Activated T-helper 1 cell treated with anti-CD3 and anti-CD28 coated beads, Interleukin-12 subunit alpha, Interleukin-12 subunit beta, Interleukin-2, Interleukin-4 antibody, amounts not matched to agents 30 ng/mL and 10 ng/mL and 1 ng/mL, durations not matched to agents 14 hours and 24 hours and 36 hours (primary cell): ENCODE measurements at regions of chr16 and their contacts with region 1.

Region 1: DNA sequence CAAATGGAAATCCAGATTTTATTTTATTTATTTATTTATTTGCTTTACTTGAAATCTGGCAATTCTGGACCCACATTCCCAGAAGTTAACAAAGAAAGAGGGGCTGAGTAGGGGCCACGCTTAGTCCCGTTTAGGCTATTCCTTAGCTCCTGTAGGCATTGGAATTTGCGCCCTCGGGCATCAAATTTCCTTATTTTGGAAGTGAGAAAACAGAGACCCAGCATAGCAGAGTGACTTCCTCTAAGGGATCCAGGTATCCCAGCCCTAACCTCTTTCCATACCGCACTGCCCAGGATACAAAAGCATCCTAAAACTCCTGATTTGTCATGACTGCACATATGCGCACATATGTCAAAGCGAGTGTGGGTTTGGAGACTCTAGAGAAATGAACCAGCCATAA is 19.0 kb upstream of the SMG1 start:
- DNase-seq: no peak
- H3K4me3 Mint-ChIP-seq: no peak overlapping the region
- H3K27ac Mint-ChIP-seq: no peak overlapping the region
- H3K4me1 Mint-ChIP-seq: peaks cover 37% of the 10 kb centered on the region
- H3K27me3 Mint-ChIP-seq: no peaks in the 10 kb centered on the region

Region 2: DNA sequence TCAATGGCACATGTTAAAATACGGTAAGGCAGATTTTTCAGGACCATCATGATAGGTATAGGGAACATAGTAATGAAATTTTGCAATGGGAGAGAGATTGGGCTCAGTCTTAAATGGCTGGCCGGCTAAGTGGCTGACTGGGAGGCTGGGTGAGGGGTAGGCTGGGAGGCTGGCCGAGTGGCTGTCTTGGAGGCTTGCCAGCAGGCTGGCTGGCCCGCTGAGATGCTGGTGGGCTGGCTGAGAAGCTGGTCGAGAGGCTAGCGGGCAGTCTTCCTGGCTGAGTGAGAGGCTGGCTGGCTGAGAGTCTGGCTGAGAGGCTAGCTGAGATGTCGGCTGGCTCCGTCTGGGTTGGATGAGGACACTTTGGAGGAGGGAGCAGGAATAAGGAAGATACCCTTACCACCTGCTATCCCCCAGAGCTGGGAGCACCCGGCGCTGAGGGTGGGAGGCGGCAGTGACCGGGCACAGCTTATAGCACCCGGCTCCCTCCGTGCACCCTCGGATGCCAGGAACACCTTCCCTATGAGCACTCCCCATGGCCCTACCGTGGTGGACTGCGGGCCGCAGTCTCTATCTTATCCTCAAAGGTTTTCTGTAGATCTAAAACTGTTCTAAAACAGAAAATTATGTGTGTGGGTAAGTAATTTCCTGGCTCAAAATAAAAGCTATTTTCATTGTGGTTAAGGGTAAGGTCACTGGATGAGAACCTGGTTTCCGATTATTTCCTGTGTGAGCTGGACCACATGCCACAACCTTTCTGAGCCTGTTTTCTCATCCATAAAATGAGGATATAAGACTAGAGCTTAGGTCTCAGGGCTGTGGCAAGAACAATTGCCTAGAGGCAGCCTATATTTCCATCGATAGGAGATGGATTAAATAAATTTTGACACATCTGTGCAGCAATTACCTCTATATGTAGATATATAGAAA is 437.9 kb after region 1 on chr16:
- intact Hi-C with region 1: loop called (anchors 5 kb)
- DNase-seq: peak; percentile 1
- H3K4me3 Mint-ChIP-seq: no peak overlapping the region
- H3K27ac Mint-ChIP-seq: no peak overlapping the region
- H3K4me1 Mint-ChIP-seq: peaks cover 37% of the 10 kb centered on the region
- H3K27me3 Mint-ChIP-seq: peaks cover 19% of the 10 kb centered on the region